ENCODE measurements at regions of chr10 and their contacts with region 1.

Region 1: GRCh38 chr10:59808896-59809643 is 55.8 kb upstream of the MRLN start:
- DNase-seq: peak in 8 of 9 donors; percentile 14 to 66 (median 21)
- ATAC-seq: peak; percentile 87
- H3K4me3 ChIP-seq: no peak overlapping the region
- H3K4me3 Mint-ChIP-seq: no peak overlapping the region
- H3K27ac ChIP-seq: no peak overlapping the region
- H3K27ac Mint-ChIP-seq: peak overlapping the region in 2 of 9 donors; percentile 12 to 47
- H3K4me1 ChIP-seq: no peaks in the 10 kb centered on the region
- H3K4me1 Mint-ChIP-seq: peaks cover 0 to 5% (median 0%) of the 10 kb centered on the region in 7 donors
- H3K27me3 ChIP-seq: no peaks in the 10 kb centered on the region
- H3K27me3 Mint-ChIP-seq: no peaks in the 10 kb centered on the region

Region 2: DNA sequence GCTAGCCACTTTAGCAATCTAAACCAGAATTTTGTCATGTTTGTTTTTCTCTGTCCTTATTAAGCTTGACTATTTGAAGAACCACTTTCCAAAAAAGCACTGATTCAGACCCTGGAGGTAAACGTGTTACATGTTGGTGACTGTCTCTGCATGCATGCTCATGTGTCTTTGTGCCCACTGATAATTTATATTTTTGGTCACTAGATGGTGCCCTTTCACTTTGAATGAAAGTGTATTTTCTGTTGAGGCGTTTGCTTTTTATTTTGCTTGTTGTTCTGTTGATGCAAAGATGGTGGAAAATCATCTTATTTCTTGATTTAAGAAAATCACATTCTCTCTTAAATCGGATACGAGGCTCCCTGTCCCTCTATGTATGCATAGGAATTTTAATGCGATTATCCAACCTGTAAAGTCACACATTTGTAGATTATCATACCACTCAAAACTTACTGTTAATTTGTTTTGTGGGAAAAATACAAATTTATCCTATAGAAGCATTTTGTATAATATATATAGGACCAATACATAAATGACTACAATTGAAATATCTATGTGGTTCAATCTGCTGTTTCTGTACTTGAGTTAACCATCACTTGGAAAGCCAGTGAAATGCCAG is 1027.1 kb before region 1 on chr10:
- CTCF ChIA-PET with region 1: no interaction called
- POLR2A ChIA-PET with region 1: no interaction called
- intact Hi-C with region 1: loop called in 1 of 2 experiments (anchors 10 kb)
- DNase-seq: peak in 2 of 9 donors; percentile 1 to 5
- ATAC-seq: no peak
- H3K4me3 ChIP-seq: no peak overlapping the region
- H3K4me3 Mint-ChIP-seq: no peak overlapping the region
- H3K27ac ChIP-seq: no peak overlapping the region
- H3K27ac Mint-ChIP-seq: no peak overlapping the region
- H3K4me1 ChIP-seq: no peaks in the 10 kb centered on the region
- H3K4me1 Mint-ChIP-seq: no peaks in the 10 kb centered on the region
- H3K27me3 ChIP-seq: no peaks in the 10 kb centered on the region
- H3K27me3 Mint-ChIP-seq: peaks cover 0 to 13% (median 0%) of the 10 kb centered on the region in 5 donors

Region 3: DNA sequence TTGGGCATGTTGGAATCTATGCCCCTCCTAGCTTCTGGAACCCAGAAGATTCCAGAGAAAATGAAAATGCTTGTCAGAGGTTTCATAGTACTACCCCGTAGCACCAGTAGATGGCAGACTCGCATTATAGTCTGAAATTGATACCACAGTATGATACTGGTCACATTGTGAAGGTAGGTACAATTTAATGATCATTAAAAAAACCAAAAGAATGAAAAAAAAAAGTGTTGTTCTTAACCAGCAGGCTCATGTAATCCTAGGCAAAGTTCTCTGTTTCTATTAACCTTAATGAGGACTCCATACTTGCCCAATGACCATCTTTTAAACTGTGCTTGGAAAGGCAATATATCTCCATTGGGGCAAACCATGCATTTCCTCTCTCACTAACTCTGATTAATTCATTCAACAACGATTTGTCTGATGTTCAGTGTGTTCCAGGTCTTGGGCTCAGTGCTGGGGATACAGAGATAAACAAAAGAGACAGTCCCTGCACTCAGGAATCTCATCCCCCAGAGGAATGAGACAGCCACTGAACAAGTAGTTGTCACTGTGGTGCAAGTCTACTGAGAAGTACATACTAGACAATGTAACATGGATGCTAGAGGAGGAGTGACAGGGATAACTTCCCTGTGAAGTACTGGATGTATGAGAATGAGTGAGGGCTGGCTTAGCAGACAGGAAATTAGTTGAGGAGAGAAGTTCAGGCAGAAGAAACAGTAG is 856.2 kb before region 1 on chr10:
- CTCF ChIA-PET with region 1: no interaction called
- POLR2A ChIA-PET with region 1: no interaction called
- intact Hi-C with region 1: loop called in 1 of 2 experiments (anchors 10 kb)
- DNase-seq: no peak
- ATAC-seq: peak; percentile 40
- H3K4me3 ChIP-seq: no peak overlapping the region
- H3K4me3 Mint-ChIP-seq: no peak overlapping the region
- H3K27ac ChIP-seq: no peak overlapping the region
- H3K27ac Mint-ChIP-seq: no peak overlapping the region
- H3K4me1 ChIP-seq: no peaks in the 10 kb centered on the region
- H3K4me1 Mint-ChIP-seq: no peaks in the 10 kb centered on the region
- H3K27me3 ChIP-seq: no peaks in the 10 kb centered on the region
- H3K27me3 Mint-ChIP-seq: peaks cover 0 to 12% (median 4%) of the 10 kb centered on the region in 5 donors

Region 4: GRCh38 chr10:59709395-59710125 is 99.5 kb before region 1 on chr10 and contains the start of gene SLC16A9:
- CTCF ChIA-PET with region 1: no interaction called
- POLR2A ChIA-PET with region 1: no interaction called
- intact Hi-C with region 1: loop called in 1 of 2 experiments (anchors 5 kb)
- DNase-seq: peak in 2 of 9 donors; percentile 1 to 75
- ATAC-seq: peak; percentile 60
- H3K4me3 ChIP-seq: no peak within 1 kb of the TSS
- H3K4me3 Mint-ChIP-seq: peak within 1 kb of the TSS in 8 of 10 donors; percentile 2 to 86 (median 48)
- H3K27ac ChIP-seq: no peak within 1 kb of the TSS
- H3K27ac Mint-ChIP-seq: peak within 1 kb of the TSS in 1 of 9 donors; percentile 34
- H3K4me1 ChIP-seq: no peaks in the 10 kb centered on the region
- H3K4me1 Mint-ChIP-seq: peaks cover 0 to 13% (median 0%) of the 10 kb centered on the region in 7 donors
- H3K27me3 ChIP-seq: no peaks in the 10 kb centered on the region
- H3K27me3 Mint-ChIP-seq: peaks cover 67 to 77% (median 70%) of the 10 kb centered on the region in 5 donors
- total RNA-seq, gene SLC16A9: 1.5 TPM in 1 of 5 experiments, not detected in the others

Region 5: DNA sequence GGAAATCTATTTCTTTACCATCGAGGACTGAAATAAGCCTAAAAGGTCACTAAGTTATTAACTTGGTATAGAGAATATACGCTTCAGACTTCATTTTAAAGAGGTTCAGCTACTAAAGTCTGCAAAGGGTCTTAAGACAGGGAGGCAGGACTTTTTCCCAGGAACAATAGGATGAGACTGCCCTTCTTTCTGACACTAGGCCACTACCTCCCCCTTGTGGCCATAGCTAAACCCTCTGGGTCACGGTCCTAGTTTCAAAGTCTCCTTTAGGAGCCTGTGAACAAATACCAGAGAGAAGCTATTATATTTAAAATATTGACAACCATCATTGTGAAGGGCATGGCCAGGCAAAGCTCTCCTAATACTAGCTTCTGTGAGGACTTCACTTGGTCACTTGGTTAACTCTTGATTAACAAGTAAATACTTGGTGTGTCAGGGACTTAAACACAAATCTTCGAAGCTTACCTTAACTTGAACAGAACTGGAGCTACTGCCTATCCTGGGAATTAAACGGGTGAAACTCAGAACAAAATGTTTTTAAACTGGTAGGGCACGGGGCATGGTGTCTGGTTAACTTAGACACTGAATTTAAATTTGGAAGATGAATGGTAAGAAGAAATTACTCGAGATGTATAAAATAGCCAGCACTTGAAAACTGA is 21.7 kb after region 1 on chr10:
- CTCF ChIA-PET with region 1: no interaction called
- POLR2A ChIA-PET with region 1: no interaction called
- intact Hi-C with region 1: loop called in 1 of 2 experiments (anchors 2 kb)
- DNase-seq: peak in 2 of 9 donors; percentile 8 to 18
- ATAC-seq: peak; percentile 64
- H3K4me3 ChIP-seq: no peak overlapping the region
- H3K4me3 Mint-ChIP-seq: no peak overlapping the region
- H3K27ac ChIP-seq: no peak overlapping the region
- H3K27ac Mint-ChIP-seq: no peak overlapping the region
- H3K4me1 ChIP-seq: no peaks in the 10 kb centered on the region
- H3K4me1 Mint-ChIP-seq: peaks cover 32 to 63% (median 48%) of the 10 kb centered on the region in 7 donors
- H3K27me3 ChIP-seq: no peaks in the 10 kb centered on the region
- H3K27me3 Mint-ChIP-seq: no peaks in the 10 kb centered on the region

Region 6: GRCh38 chr10:60032723-60033122 is 223.7 kb after region 1 on chr10:
- CTCF ChIA-PET with region 1: no interaction called
- POLR2A ChIA-PET with region 1: no interaction called
- intact Hi-C with region 1: loop called in 1 of 2 experiments (anchors 5 kb)
- DNase-seq: peak in 7 of 9 donors; percentile 5 to 31 (median 12)
- ATAC-seq: peak; percentile 86
- H3K4me3 ChIP-seq: no peak overlapping the region
- H3K4me3 Mint-ChIP-seq: no peak overlapping the region
- H3K27ac ChIP-seq: no peak overlapping the region
- H3K27ac Mint-ChIP-seq: peak overlapping the region in 1 of 9 donors; percentile 32
- H3K4me1 ChIP-seq: no peaks in the 10 kb centered on the region
- H3K4me1 Mint-ChIP-seq: peaks cover 0 to 9% (median 0%) of the 10 kb centered on the region in 7 donors
- H3K27me3 ChIP-seq: no peaks in the 10 kb centered on the region
- H3K27me3 Mint-ChIP-seq: no peaks in the 10 kb centered on the region